ENCODE measurements at regions of chr15 and their contacts with region 1.

Region 1: DNA sequence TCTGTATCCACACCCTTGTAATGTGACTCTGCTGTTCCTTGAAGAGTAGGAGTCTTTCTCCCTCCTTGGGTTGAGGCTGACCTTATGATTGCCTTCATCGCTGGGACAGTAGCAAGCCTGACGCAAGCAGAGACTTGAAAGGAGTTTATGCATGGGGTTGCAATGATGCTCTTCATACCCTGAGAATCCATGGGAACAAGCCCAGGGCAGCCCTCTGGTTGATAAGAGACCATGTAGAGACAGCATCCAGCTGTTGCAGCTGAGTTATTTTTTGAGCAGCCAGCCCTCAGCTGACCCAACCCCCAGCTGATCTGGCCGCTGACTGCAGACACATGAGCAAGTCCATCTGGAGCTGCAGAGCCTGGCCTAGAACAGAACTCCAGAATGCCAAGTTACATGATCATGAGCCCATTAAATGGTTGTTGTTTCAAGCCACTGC is 60.6 kb upstream of the ARNT2 start:
- DNase-seq: peak; percentile 66 to 77
- ATAC-seq: peak; percentile 90 to 97 (median 94)
- H3K4me3 ChIP-seq: no peak overlapping the region
- H3K27ac ChIP-seq: peak overlapping the region in 4 of 10 donors; percentile 20 to 40 (median 34)
- H3K4me1 ChIP-seq: peaks cover 0 to 15% (median 0%) of the 10 kb centered on the region in 9 donors
- H3K27me3 ChIP-seq: peaks cover 0 to 11% (median 5%) of the 10 kb centered on the region in 7 donors
- CTCF ChIP-seq: no peak

Region 2: GRCh38 chr15:80321853-80322252 is 21.7 kb before region 1 on chr15:
- intact Hi-C with region 1: loop called in 1 of 10 experiments (anchors 1 kb)
- DNase-seq: no peak
- ATAC-seq: no peak
- H3K4me3 ChIP-seq: no peak overlapping the region
- H3K27ac ChIP-seq: no peak overlapping the region
- H3K4me1 ChIP-seq: peaks cover 0 to 5% (median 0%) of the 10 kb centered on the region in 9 donors
- H3K27me3 ChIP-seq: peaks cover 0 to 6% (median 0%) of the 10 kb centered on the region in 7 donors
- CTCF ChIP-seq: no peak